Dendritic cell treated with granulocyte-macrophage colony-stimulating factor and Interleukin-4, amounts not matched to agents 40 ng/mL and 50 ng/mL, for 4 days (primary cell): ENCODE measurements at regions of chr9 and their contacts with region 1.

Region 1: DNA sequence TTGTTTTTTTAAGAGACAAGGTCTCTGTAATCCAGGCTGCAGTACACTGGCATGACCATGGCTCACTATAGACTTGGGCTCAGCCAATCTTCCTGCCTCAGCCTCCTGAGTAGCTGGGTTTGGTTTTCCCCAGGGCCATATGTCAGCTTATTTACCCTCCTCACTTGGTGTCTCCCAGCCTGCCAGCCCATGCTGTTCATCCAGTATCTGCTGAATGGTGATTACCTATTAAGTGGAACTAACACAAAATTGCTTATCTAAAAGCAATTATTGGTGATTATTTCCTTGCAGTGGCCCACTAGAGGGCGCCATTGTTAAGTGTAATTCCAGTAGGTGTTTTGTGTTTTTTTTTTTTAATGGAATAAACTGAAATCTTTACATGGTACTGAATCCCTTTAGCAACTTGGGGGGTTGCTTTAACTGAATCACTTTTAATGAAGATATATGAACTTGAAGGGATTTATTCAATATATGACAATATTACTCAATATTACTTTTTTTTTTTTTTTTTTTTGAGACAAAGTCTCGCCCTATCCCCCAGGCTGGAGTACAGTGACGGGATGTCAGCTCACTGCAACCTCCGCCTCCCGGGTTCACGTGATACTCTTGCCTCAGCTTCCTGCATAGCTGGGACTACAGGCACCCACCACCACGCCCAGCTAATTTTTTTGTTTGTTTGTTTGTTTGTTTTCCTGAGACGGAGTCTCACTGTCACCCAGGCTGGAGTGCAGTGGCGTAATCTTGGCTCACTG is 13.8 kb downstream of the EXOSC2 start:
- H3K4me3 Mint-ChIP-seq: no peak overlapping the region
- H3K27ac Mint-ChIP-seq: no peak overlapping the region
- H3K4me1 Mint-ChIP-seq: peaks cover 3% of the 10 kb centered on the region
- H3K27me3 Mint-ChIP-seq: peaks cover 7% of the 10 kb centered on the region

Region 2: DNA sequence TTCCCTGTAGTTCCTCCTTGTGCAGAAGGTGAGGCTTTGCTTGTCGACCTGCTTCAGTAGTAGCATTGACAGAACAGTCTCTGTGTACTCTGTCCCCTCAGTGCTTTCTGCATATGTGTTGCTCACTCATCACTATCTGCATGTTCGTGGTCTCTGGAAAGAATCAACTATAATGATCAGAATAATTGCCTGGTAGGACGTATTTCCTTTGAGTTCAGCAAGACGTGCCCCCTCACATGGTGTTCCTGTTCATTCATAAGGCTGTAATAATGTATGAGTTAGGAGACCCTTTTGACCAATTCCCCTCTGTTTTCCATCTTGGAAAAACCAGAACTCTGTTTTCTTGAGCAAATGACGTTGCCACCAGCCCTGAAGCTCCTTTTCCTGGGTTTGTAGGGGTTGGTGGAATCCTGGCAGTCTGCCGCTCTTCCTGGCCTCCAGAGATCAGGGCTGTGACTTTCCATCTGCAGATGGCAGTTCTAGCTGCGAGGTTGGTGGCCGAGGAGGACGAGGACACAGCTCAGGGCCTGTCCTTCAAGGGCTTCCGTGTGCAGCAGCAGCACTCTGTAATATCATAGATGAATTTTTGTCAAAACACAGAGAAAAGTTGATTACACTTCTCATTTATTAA is 48.1 kb after region 1 on chr9:
- intact Hi-C with region 1: no loop called
- H3K4me3 Mint-ChIP-seq: no peak overlapping the region
- H3K27ac Mint-ChIP-seq: peak overlapping the region; percentile 76
- H3K4me1 Mint-ChIP-seq: peaks cover 31% of the 10 kb centered on the region
- H3K27me3 Mint-ChIP-seq: no peaks in the 10 kb centered on the region

Region 3: GRCh38 chr9:130940693-130941576 is 233.5 kb after region 1 on chr9:
- intact Hi-C with region 1: loop called (anchors 5 kb)
- H3K4me3 Mint-ChIP-seq: no peak overlapping the region
- H3K27ac Mint-ChIP-seq: no peak overlapping the region
- H3K4me1 Mint-ChIP-seq: peaks cover 15% of the 10 kb centered on the region
- H3K27me3 Mint-ChIP-seq: peaks cover 68% of the 10 kb centered on the region

Region 4: GRCh38 chr9:131046581-131047202 is 339.3 kb after region 1 on chr9:
- intact Hi-C with region 1: loop called (anchors 5 kb)
- H3K4me3 Mint-ChIP-seq: peak overlapping the region; percentile 48
- H3K27ac Mint-ChIP-seq: no peak overlapping the region
- H3K4me1 Mint-ChIP-seq: peaks cover 6% of the 10 kb centered on the region
- H3K27me3 Mint-ChIP-seq: peaks cover 5% of the 10 kb centered on the region